BJ (cell line): ENCODE measurements at regions of chr12 and their contacts with region 1.

Region 1: DNA sequence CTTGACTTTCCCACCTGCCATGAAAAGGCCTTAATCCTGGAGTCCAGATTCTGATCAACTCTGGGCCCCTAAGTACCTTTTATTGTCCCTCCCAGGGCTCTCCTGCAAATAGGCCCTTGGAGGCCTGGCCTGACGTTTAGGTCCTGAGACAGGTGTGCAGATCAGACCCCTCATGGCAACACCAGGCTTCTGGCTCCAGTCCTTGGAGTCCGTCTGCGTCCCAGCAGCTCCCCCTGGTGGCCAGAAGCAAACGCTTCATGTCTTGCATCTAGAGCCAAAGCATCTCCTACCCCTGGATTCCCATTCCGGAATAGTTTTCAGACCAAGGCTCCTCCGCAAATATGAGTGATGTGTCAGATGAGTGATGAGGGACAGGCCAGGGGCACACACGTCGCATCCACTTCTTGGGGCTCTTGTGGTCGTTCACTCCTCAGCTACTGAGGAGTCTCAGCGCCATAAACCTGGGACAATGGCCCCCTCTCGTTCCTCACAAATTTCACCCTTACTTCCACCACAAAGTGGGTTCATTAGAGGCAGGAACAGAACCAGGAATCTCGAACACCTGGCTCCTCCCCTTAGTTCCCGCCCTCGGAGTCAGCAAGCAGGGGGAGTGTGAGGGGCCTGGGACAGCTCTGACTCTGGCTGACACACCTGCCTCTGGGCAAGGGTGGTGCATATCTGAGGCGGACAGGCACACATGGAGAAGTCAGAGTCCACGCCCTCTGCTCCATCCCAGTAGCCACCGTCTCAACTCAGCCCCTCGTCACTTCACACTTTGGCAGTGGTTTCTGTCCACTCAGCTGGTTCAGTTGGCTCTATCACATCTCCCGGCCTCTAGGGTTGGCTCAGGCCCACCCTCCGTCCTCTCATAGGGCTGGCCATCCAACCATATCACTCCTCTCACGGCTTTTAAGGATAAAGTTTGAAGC is 77.9 kb upstream of the PWP1 start:
- DNase-seq: no peak
- H3K4me3 ChIP-seq: no peak overlapping the region
- H3K27me3 ChIP-seq: no peaks in the 10 kb centered on the region
- CTCF ChIP-seq: peak; percentile 95

Region 2: DNA sequence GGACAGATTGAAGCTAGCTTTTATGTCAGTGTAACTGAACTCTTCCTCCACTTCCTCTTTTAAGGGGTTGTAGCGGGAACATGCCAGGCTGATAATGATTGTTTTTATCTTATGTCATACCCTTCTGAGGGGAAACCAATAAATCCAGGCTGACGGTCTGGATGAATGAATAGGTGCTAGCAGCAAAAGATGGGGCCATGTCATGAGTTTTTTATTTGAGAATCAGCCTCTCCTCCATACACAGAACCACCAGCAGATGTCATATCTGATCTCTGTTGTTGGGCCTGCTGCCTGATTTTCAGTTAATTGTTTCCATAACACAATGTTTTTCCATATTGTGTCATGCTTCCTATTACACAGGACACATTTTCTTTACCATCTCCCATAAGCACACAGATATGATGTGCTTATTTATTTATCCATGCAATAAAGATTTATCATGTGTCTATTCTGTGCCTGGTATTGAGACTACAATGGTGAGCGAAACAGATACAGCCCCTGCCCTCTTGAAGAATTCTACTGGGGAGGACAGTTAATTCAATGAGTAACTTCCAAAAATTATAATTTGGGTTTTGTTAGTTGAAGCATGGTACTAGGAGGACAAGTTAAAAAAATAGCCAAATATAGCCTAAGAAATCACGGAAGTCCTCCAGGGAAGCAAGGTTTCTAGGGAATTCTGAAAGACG is 480.8 kb before region 1 on chr12:
- CTCF ChIA-PET with region 1: interaction called, 341 read pairs
- POLR2A ChIA-PET with region 1: no interaction called
- DNase-seq: no peak
- H3K4me3 ChIP-seq: no peak overlapping the region
- H3K27me3 ChIP-seq: no peaks in the 10 kb centered on the region; the same call in 1 of the 2 replicates
- CTCF ChIP-seq: peak; percentile 36

Region 3: GRCh38 chr12:107144990-107145389 is 462.7 kb before region 1 on chr12:
- CTCF ChIA-PET with region 1: interaction called, 10 read pairs
- POLR2A ChIA-PET with region 1: no interaction called
- DNase-seq: no peak
- H3K4me3 ChIP-seq: no peak overlapping the region
- H3K27me3 ChIP-seq: no peaks in the 10 kb centered on the region
- CTCF ChIP-seq: no peak

Region 4: DNA sequence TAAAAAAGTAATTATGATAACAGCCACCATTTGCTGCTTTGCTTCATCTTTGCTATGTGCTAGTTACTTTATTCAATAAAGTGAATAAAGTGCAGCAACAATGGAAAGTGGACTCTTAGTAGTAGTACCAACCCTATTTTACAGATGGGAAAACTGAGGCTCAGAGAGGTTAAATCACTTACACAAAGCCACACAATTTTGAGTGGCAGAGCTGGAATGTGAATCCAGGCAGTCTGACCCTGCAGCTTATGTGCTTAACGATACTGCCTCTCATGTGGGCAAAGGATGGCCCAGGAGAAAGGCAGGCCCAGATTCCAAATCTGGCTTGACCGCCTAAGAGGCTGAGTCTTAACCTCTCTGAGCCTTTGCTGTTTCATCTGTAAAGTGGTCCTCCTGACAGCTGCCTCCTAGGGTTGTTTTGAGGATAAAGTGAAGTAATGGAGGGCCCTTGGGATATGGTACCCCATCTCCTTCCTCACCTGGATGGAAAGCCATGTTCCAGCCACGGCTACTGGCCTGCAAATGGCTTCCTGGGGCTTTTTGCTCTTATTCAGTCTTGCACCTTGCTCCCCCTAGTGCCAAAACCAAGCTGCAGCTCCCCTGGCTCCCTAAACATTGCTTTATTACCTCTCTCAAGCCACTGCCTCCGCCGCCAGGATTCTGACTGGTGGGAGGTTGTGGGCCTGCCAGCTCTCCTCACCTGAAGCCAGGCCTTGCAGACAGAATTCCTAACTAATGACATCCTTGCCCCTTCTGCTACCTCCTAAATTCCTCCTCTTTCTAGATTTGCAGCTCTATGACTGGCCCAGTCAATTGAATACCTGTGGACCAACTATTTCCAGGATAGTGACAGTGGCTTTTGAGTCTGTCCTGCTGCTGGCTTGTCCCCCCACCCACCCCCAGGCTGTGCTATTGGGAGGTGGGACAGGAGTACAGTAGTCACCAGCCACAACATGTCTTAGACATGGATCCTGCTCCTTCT is 205.4 kb before region 1 on chr12:
- CTCF ChIA-PET with region 1: interaction called, 16 read pairs
- POLR2A ChIA-PET with region 1: no interaction called
- DNase-seq: no peak
- H3K4me3 ChIP-seq: no peak overlapping the region
- H3K27me3 ChIP-seq: no peaks in the 10 kb centered on the region
- CTCF ChIP-seq: peak; percentile 68

Region 5: GRCh38 chr12:107622005-107622404 is 14.3 kb after region 1 on chr12:
- CTCF ChIA-PET with region 1: interaction called, 47 read pairs
- POLR2A ChIA-PET with region 1: no interaction called
- DNase-seq: no peak
- H3K4me3 ChIP-seq: no peak overlapping the region
- H3K27me3 ChIP-seq: no peaks in the 10 kb centered on the region
- CTCF ChIP-seq: peak; percentile 32; the same call in 1 of the 2 replicates